Left ventricle myocardium superior (tissue), 1 donor: ENCODE measurements at regions of chrX and their contacts with region 1.

Region 1: DNA sequence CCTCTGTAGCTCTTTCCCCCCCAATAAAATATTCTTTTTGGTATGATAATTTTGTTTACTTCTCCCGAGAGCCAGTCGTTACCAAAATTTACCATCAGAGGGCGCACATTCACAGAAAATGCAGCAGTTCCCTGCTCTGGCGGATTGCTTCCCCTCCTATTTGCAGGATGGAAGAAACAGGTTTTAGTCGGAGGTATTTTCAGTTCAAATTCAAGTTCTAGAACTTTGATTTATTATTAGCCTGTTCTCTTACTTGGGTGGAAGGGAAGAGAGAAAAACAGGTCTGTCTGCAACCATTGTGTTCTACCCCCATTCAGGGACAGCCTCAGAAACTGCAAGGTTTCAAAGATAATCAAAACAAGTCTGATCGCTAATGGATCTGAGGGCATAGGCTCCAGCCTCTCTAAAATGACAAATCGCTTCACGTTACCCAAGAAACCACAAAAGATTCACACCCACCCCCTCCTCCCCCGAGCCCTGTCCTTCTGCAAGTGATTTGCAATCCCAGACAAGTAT is 263.8 kb upstream of the RPS6KA3 start:
- DNase-seq: peak; percentile 23
- ATAC-seq: peak; percentile 61

Region 2: DNA sequence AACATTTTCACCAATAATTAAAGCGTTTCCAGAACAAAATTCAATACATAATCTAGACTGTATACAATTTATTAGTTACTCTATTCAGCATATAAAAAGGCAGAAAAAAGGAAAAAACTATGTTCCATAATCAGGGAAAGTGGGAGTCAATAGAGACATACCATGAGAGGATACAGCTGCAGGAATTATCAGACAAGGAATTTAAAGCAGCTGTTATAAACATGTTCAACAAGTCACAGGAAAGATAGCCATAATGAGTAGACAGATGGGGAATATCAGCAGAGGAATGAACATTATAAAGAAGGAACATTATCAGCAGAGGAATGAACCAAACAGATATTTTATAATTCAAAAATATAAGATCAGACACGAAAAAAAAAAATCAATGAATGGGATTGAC is 236.9 kb after region 1 on chrX:
- intact Hi-C with region 1: no loop called
- DNase-seq: no peak
- ATAC-seq: no peak

Region 3: GRCh38 chrX:21479695-21480270 is 949.3 kb after region 1 on chrX:
- intact Hi-C with region 1: loop called (anchors 10 kb)
- DNase-seq: no peak
- ATAC-seq: peak; percentile 55